Activated CD4-positive, alpha-beta T cell treated with anti-CD3 and anti-CD28 coated beads for 36 hours (primary cell): ENCODE measurements at regions of chr2 and their contacts with region 1.

Region 1: GRCh38 chr2:176409671-176410070 is 140.4 kb downstream of the MTX2 start:
- DNase-seq: no peak
- ATAC-seq: no peak
- H3K4me3 Mint-ChIP-seq: no peak overlapping the region
- H3K27ac Mint-ChIP-seq: no peak overlapping the region
- H3K4me1 Mint-ChIP-seq: no peaks in the 10 kb centered on the region
- H3K27me3 Mint-ChIP-seq: peaks cover 32% of the 10 kb centered on the region

Region 2: DNA sequence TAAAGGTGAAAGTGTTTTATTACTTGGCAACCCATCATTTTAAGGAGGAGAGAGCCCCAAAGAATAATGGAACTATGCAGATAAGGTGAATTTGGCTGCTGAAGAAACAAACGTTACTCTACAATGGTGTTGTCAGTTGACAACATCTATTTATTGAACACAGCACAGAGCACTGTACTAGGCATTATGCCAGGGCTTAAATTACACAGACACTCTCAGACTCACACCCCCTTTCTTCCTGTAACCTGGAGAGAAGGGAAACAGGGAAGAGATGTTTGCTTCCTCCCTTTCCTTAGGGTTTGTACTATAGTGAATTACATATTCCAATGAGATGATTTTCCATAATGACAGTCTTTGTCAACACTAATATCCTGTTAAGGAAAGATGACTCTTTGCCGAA is 1134.1 kb before region 1 on chr2:
- CTCF ChIA-PET with region 1: no interaction called
- POLR2A ChIA-PET with region 1: no interaction called
- intact Hi-C with region 1: no loop called
- DNase-seq: no peak
- ATAC-seq: no peak
- H3K4me3 Mint-ChIP-seq: no peak overlapping the region
- H3K27ac Mint-ChIP-seq: no peak overlapping the region
- H3K4me1 Mint-ChIP-seq: no peaks in the 10 kb centered on the region
- H3K27me3 Mint-ChIP-seq: peaks cover 10% of the 10 kb centered on the region

Region 3: DNA sequence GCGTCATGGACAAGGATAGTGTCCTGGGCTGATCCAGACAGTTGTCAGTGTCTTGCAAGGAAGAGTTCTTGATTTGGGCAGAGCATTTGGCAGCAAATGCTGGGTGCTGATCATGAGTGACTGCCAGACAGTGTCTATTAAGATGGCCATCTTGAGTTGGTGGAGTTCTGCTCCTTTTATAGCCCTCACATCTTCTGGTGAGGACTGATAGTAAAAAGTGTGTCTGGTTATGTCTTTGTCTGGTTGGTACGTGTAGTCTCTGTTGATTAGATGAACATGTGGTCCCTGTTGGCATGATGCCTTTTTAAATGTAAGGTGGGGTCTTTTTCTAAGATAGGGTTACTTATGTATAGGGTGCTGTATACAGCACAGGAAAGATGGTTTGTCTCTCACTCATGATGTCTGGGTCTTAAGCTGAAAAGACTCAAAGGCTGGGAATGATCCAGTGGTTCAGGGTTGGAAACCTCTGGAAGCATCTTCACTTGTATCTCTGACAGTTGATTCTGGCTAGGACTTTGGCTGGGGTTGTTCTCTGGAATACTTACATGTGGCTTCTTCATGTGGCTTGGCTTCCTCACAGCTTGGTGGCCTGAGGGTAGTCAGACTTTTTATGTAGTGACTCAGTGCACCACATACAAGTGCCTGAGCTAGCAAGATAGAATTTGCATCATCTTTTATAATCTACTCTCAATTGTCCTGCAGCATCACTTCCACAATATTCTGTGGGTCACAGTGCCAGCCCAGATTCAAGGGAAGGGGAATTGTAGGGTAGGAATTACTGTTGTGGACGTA is 128.6 kb before region 1 on chr2:
- CTCF ChIA-PET with region 1: no interaction called
- POLR2A ChIA-PET with region 1: no interaction called
- intact Hi-C with region 1: no loop called
- DNase-seq: no peak
- ATAC-seq: peak; percentile 44
- H3K4me3 Mint-ChIP-seq: no peak overlapping the region
- H3K27ac Mint-ChIP-seq: no peak overlapping the region
- H3K4me1 Mint-ChIP-seq: peaks cover 48% of the 10 kb centered on the region
- H3K27me3 Mint-ChIP-seq: no peaks in the 10 kb centered on the region

Region 4: DNA sequence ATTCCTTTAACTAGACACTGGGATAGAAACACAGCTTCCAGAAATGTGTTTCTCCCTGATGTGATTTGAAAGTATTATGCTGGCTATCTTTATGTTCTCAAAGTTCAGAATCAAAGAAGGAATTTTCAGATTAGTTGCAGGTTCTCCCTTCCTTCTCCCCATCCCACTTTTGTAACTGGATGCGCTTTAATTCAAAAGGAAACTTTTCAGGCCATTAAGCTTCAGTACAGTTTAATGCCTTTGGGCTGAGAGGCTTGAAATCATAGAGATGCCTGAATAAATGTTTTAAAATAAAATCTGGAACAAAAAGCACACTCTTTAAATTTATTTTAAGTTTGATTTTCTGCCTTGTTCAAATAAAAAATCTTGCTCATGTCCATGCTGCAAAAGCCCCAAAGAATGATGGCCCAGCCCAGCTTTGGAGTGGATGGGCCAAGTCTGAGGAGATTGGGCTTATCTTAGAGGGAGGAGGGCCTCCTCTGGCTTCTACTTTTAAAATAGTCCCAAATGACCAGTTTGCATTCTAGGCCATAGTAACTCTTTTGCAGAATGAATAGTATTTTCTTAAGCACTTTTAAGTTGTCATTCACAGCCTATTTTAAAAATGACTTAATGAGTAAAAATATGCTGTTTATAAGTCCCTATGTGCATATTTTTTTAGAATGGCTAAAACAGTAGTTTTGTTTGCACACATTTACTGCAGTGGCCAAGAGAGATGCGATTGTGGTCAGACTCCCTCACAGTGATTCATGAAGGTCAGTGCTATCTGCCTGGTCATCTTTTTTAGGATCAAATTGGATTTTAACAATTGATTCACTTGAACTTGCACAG is 11.2 kb before region 1 on chr2:
- CTCF ChIA-PET with region 1: no interaction called
- POLR2A ChIA-PET with region 1: no interaction called
- intact Hi-C with region 1: loop called in 1 of 2 experiments (anchors 1 kb)
- DNase-seq: no peak
- ATAC-seq: no peak
- H3K4me3 Mint-ChIP-seq: no peak overlapping the region
- H3K27ac Mint-ChIP-seq: no peak overlapping the region
- H3K4me1 Mint-ChIP-seq: no peaks in the 10 kb centered on the region
- H3K27me3 Mint-ChIP-seq: peaks cover 24% of the 10 kb centered on the region

Region 5: GRCh38 chr2:176643646-176644045 is 234.0 kb after region 1 on chr2:
- CTCF ChIA-PET with region 1: no interaction called
- POLR2A ChIA-PET with region 1: no interaction called
- intact Hi-C with region 1: no loop called
- DNase-seq: no peak
- ATAC-seq: no peak
- H3K4me3 Mint-ChIP-seq: no peak overlapping the region
- H3K27ac Mint-ChIP-seq: no peak overlapping the region
- H3K4me1 Mint-ChIP-seq: no peaks in the 10 kb centered on the region
- H3K27me3 Mint-ChIP-seq: peaks cover 56% of the 10 kb centered on the region

Region 6: GRCh38 chr2:177520356-177520723 is 1110.7 kb after region 1 on chr2:
- CTCF ChIA-PET with region 1: no interaction called
- POLR2A ChIA-PET with region 1: no interaction called
- intact Hi-C with region 1: no loop called
- DNase-seq: no peak
- ATAC-seq: no peak
- H3K4me3 Mint-ChIP-seq: no peak overlapping the region
- H3K27ac Mint-ChIP-seq: no peak overlapping the region
- H3K4me1 Mint-ChIP-seq: no peaks in the 10 kb centered on the region
- H3K27me3 Mint-ChIP-seq: no peaks in the 10 kb centered on the region